CD8-positive, alpha-beta memory T cell (primary cell): ENCODE measurements at regions of chr9 and their contacts with region 1.

Region 1: DNA sequence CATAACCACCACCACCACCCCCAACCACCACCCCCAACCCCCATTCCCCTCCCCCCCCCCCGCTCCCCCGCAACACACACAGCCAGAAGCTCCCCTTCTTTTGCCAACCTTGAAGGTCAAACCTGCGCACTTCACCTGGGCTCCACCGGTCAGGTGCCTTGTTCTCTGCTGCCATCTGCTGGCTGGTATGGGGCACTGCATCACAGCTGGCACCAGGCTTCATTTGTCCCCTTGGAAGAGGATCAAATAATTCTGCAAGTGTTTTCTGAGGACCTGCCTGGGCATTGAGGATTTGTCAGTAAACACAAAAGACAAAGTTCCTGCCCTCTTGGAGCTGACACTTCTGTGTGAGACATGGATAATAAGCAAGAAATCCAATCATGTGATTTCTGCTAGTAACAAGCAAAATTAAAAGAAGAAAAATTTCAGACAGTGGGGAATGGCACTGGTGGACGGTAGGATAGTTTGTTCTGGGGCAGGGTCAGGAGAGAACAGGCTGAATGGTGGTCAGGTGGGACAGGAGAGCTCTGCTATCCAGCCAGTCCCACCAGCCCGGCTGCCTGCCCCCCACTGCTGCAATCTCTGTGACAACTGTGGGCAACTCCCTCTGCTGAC is 55.6 kb upstream of the LMX1B start:
- DNase-seq: peak; percentile 47 to 73 (median 52)
- H3K4me3 ChIP-seq: no peak overlapping the region
- H3K4me3 Mint-ChIP-seq: no peak overlapping the region
- H3K27ac ChIP-seq: no peak overlapping the region
- H3K27ac Mint-ChIP-seq: no peak overlapping the region
- H3K4me1 ChIP-seq: no peaks in the 10 kb centered on the region
- H3K4me1 Mint-ChIP-seq: peaks cover 0 to 3% (median 0%) of the 10 kb centered on the region in 3 donors
- H3K27me3 ChIP-seq: no peaks in the 10 kb centered on the region
- H3K27me3 Mint-ChIP-seq: peaks cover 10 to 33% of the 10 kb centered on the region in 2 donors

Region 2: GRCh38 chr9:126506361-126506941 is 51.7 kb before region 1 on chr9:
- CTCF ChIA-PET with region 1: interaction called, 204 read pairs
- POLR2A ChIA-PET with region 1: interaction called, 4 read pairs
- DNase-seq: no peak
- H3K4me3 ChIP-seq: no peak overlapping the region
- H3K4me3 Mint-ChIP-seq: no peak overlapping the region
- H3K27ac ChIP-seq: no peak overlapping the region
- H3K27ac Mint-ChIP-seq: no peak overlapping the region
- H3K4me1 ChIP-seq: no peaks in the 10 kb centered on the region
- H3K4me1 Mint-ChIP-seq: no peaks in the 10 kb centered on the region
- H3K27me3 ChIP-seq: no peaks in the 10 kb centered on the region
- H3K27me3 Mint-ChIP-seq: peaks cover 0 to 3% of the 10 kb centered on the region in 2 donors

Region 3: DNA sequence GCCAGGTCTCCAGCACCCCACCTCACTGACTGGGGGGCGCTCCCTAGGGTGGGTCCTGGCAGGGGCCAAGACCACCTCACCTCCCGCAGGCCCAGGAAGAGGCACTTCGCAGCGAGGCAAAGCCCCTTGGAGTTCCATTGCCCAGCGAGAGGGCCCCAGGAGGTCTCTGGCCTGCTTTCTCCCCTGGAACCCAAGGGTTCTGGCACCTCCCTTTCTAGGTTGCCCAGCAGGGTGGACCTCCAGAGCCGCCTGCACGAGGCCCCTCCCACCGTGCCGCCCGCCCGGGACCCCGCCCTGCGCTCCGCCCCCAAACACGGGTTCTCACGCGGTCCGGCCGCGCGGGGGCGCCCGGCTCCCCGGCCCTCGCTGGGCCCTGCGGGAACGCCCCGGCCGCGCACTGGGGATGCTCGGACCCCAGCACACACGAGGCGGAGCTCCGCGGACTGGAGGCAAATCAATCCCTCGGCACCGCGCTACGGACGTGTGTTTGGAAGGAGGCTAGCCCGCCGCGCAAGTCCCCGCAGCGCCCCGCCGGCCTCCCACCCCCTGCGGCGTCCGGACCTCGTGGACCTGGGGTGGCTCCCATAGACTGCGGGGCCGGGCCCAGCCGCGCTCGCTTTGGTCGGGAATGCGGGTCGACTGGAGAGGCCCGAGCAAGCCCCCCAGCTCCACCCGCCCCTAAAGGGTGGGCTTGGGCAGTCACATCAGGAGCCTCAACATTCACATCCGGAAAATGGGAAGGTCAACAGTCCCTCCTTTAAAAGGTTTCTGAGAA is 43.9 kb before region 1 on chr9:
- CTCF ChIA-PET with region 1: interaction called, 29 read pairs
- POLR2A ChIA-PET with region 1: interaction called, 4 read pairs
- DNase-seq: peak; percentile 40 to 73 (median 60)
- H3K4me3 ChIP-seq: no peak overlapping the region
- H3K4me3 Mint-ChIP-seq: peak overlapping the region in 1 of 7 donors; percentile 41
- H3K27ac ChIP-seq: no peak overlapping the region
- H3K27ac Mint-ChIP-seq: no peak overlapping the region
- H3K4me1 ChIP-seq: peaks cover 29% of the 10 kb centered on the region
- H3K4me1 Mint-ChIP-seq: peaks cover 31 to 39% (median 32%) of the 10 kb centered on the region in 3 donors
- H3K27me3 ChIP-seq: peaks cover 12% of the 10 kb centered on the region
- H3K27me3 Mint-ChIP-seq: peaks cover 0 to 43% of the 10 kb centered on the region in 2 donors

Region 4: GRCh38 chr9:126587187-126588185 is 29.3 kb after region 1 on chr9:
- CTCF ChIA-PET with region 1: no interaction called
- POLR2A ChIA-PET with region 1: no interaction called
- DNase-seq: no peak
- H3K4me3 ChIP-seq: no peak overlapping the region
- H3K4me3 Mint-ChIP-seq: no peak overlapping the region
- H3K27ac ChIP-seq: no peak overlapping the region
- H3K27ac Mint-ChIP-seq: no peak overlapping the region
- H3K4me1 ChIP-seq: no peaks in the 10 kb centered on the region
- H3K4me1 Mint-ChIP-seq: no peaks in the 10 kb centered on the region
- H3K27me3 ChIP-seq: no peaks in the 10 kb centered on the region
- H3K27me3 Mint-ChIP-seq: peaks cover 32 to 70% of the 10 kb centered on the region in 2 donors